ENCODE measurements at regions of chr6 and their contacts with region 1.

Region 1: GRCh38 chr6:4402439-4402976 is 267.1 kb upstream of the ECI2 start:
- DNase-seq: peak in 1 of 10 donors; percentile 21
- H3K4me3 ChIP-seq: no peak overlapping the region
- H3K27ac ChIP-seq: peak overlapping the region in 36 of 59 donors; percentile 3 to 81 (median 46)
- H3K27me3 ChIP-seq: no peaks in the 10 kb centered on the region
- CTCF ChIP-seq: no peak

Region 2: GRCh38 chr6:4466261-4466660 is 63.8 kb after region 1 on chr6:
- intact Hi-C with region 1: loop called in 1 of 2 experiments (anchors 5 kb)
- DNase-seq: no peak
- H3K4me3 ChIP-seq: no peak overlapping the region
- H3K27ac ChIP-seq: no peak overlapping the region
- H3K27me3 ChIP-seq: no peaks in the 10 kb centered on the region
- CTCF ChIP-seq: no peak

Region 3: GRCh38 chr6:4879724-4880371 is 477.3 kb after region 1 on chr6:
- intact Hi-C with region 1: no loop called
- DNase-seq: no peak
- H3K4me3 ChIP-seq: no peak overlapping the region
- H3K27ac ChIP-seq: no peak overlapping the region
- H3K27me3 ChIP-seq: no peaks in the 10 kb centered on the region
- CTCF ChIP-seq: no peak